GM12878 (cell line): ENCODE measurements at regions of chr11 and their contacts with region 1.

Region 1: GRCh38 chr11:47248664-47249377 is at the start of gene ACP2:
- DNase-seq: peak; percentile 64
- ATAC-seq: peak; percentile 95
- H3K4me3 ChIP-seq: peak within 1 kb of the TSS; percentile 91
- H3K27ac ChIP-seq: peak within 1 kb of the TSS; percentile 90
- H3K4me1 ChIP-seq: peaks cover 8% of the 10 kb centered on the region
- H3K27me3 ChIP-seq: no peaks in the 10 kb centered on the region
- CTCF ChIP-seq: peak; percentile 33 to 51 (median 43); a peak in 5 of 6 replicates
- EP300 ChIP-seq: no peak
- POLR2A ChIP-seq: peak; percentile 94
- RAD21 ChIP-seq: peak; percentile 45
- polyA plus RNA-seq, gene ACP2: 0.98 to 1.1 TPM

Region 2: GRCh38 chr11:47124675-47125074 is 124.1 kb before region 1 on chr11:
- CTCF ChIA-PET with region 1: no interaction called
- POLR2A ChIA-PET with region 1: no interaction called
- RAD21 ChIA-PET with region 1: no interaction called
- SMC1A ChIA-PET with region 1: no interaction called
- in situ Hi-C with region 1: no loop called
- intact Hi-C with region 1: no loop called
- DNase-seq: no peak
- ATAC-seq: no peak
- H3K4me3 ChIP-seq: no peak overlapping the region
- H3K27ac ChIP-seq: no peak overlapping the region
- H3K4me1 ChIP-seq: no peaks in the 10 kb centered on the region
- H3K27me3 ChIP-seq: no peaks in the 10 kb centered on the region
- CTCF ChIP-seq: no peak
- EP300 ChIP-seq: no peak
- POLR2A ChIP-seq: no peak
- RAD21 ChIP-seq: no peak

Region 3: GRCh38 chr11:47269002-47269828 is 20.4 kb after region 1 on chr11:
- CTCF ChIA-PET with region 1: interaction called, 6 read pairs
- POLR2A ChIA-PET with region 1: interaction called, 6 read pairs
- RAD21 ChIA-PET with region 1: interaction called, 12 read pairs
- SMC1A ChIA-PET with region 1: no interaction called
- in situ Hi-C with region 1: no loop called
- intact Hi-C with region 1: no loop called
- DNase-seq: no peak
- ATAC-seq: peak; percentile 77
- H3K4me3 ChIP-seq: peak overlapping the region; percentile 78
- H3K27ac ChIP-seq: peak overlapping the region; percentile 79
- H3K4me1 ChIP-seq: peaks cover 23% of the 10 kb centered on the region
- H3K27me3 ChIP-seq: no peaks in the 10 kb centered on the region
- CTCF ChIP-seq: 0 out of 6 replicates have a peak, but pooled peaks of 1 of the 3 experiments have one; percentile 20
- EP300 ChIP-seq: 0 out of 4 replicates have a peak, but pooled peaks of 1 of the 2 experiments have one; percentile 18
- POLR2A ChIP-seq: peak; percentile 14
- RAD21 ChIP-seq: no peak